Activated B cell treated with CpG ODN at 0.5 μM for 24 hours (primary cell): ENCODE measurements at regions of chr1 and their contacts with region 1.

Region 1: DNA sequence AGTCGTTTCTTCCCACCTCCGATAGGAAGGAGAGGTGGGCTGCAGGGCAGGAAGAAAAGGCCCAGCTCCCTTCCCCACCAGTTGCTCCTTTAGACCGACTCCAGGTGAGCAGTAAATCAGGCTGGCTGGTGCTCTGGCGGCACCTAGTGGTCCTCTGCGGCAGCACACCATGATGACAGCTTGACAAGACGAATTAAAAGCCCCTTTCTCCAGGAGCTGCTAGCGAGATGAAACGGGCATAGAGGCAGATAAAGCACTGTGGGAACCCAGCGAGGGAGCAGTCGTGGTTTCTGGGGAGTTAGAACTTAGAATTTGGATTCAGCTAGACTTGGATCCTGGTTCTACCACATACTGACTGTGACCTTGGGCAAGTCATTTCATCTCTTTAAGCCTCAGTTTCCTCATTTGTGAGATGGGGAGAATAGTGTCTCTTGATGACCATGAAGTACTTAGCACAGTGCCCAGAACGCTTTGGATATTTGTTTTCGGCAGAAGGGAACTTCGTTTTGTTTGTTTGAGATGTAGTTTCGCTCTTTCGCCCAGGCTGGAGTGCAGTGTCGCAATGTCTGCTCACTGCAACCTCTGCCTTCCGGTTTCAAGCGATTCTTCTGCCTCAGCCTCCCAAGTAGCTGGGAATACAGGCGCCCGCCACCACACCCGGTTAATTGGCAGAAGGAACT is 21.8 kb upstream of the COL9A2 start:
- DNase-seq: peak; percentile 87
- ATAC-seq: peak; percentile 93
- H3K4me3 Mint-ChIP-seq: peak overlapping the region; percentile 36
- H3K27ac Mint-ChIP-seq: peak overlapping the region; percentile 64
- H3K4me1 Mint-ChIP-seq: peaks cover 40% of the 10 kb centered on the region
- H3K27me3 Mint-ChIP-seq: no peaks in the 10 kb centered on the region
- CTCF ChIP-seq: peak; percentile 96

Region 2: DNA sequence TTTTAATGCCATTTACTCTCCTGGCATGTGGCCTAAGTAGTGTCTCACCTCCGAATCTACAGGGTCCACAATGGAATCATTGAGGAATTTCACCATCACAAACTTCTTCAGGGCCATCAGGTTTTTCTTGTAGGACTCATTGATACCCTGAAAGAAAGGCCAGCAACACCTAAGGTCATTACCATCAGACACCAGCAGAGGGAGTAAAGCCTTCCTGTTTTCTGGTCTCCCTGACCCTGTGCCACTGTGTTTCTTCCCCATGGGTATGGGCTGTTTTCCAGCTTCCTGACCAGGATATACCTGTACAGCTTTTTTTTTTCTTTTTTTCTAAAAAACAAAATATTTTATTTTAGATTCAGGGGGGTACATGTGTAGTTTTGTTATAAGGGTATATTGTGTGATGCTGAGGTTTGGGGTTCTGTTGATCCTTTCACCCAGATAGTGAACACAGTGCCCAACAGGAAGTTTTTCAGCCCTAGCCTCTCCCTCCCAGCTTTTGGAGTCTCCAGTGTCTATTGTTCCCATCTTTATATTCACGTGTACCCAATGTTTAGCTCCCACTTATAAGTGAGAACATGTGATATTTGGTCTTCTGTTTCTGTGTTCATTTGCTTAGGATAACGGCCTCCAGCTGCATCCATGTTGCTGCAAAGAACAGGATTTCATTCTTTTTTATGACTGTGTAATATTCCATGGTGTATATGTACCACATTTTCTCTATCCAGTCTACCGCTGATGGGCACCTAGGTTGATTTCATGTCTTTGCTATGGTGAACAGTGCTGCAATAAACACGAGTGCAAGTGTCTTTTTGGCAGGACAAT is 260.2 kb before region 1 on chr1:
- CTCF ChIA-PET with region 1: interaction called, 25 read pairs
- POLR2A ChIA-PET with region 1: no interaction called
- intact Hi-C with region 1: loop called (anchors 1 kb)
- DNase-seq: no peak
- ATAC-seq: peak; percentile 92
- H3K4me3 Mint-ChIP-seq: no peak overlapping the region
- H3K27ac Mint-ChIP-seq: no peak overlapping the region
- H3K4me1 Mint-ChIP-seq: peaks cover 13% of the 10 kb centered on the region
- H3K27me3 Mint-ChIP-seq: no peaks in the 10 kb centered on the region
- CTCF ChIP-seq: peak; percentile 74

Region 3: DNA sequence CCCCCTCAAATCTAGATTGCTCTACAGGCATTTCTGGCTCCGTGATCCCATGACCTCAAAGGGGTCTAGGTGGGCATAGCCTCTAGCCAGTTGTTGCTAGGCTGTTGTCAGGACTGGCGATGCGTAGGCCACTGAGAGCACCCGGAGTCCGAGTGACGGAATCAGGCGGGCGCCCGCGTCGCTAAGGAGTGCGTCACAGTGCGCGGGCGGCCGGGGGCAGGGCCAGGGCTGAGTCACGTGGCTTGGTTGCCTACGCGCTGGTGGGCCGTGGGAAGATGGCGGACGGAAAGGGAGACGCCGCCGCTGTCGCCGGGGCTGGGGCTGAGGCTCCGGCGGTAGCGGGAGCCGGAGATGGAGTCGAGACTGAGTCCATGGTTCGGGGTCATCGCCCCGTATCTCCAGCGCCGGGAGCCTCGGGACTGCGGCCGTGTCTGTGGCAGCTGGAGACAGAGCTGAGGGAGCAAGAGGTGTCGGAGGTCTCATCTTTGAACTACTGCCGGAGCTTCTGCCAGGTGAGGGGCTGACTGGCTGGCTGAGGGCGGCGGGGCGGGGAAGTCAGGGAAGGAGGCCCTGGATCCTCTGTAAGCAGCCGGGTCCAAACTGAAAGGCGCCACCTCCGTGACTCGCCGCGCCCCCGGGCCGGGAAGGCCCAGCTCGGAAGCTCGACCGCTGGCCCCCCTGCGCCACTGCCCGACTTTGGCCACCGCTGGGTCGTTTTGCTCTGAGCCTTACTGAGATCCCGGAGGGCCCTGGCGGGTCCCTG is 177.6 kb before region 1 on chr1 and contains the start of gene RLF:
- CTCF ChIA-PET with region 1: interaction called, 151 read pairs
- POLR2A ChIA-PET with region 1: no interaction called
- intact Hi-C with region 1: no loop called
- DNase-seq: peak; percentile 94
- ATAC-seq: peak; percentile 96
- H3K4me3 Mint-ChIP-seq: no peak within 1 kb of the TSS
- H3K27ac Mint-ChIP-seq: no peak within 1 kb of the TSS
- H3K4me1 Mint-ChIP-seq: peaks cover 22% of the 10 kb centered on the region
- H3K27me3 Mint-ChIP-seq: no peaks in the 10 kb centered on the region
- CTCF ChIP-seq: no peak
- total RNA-seq, gene RLF: 18.1 and 19.2 TPM in 2 replicates

Region 4: DNA sequence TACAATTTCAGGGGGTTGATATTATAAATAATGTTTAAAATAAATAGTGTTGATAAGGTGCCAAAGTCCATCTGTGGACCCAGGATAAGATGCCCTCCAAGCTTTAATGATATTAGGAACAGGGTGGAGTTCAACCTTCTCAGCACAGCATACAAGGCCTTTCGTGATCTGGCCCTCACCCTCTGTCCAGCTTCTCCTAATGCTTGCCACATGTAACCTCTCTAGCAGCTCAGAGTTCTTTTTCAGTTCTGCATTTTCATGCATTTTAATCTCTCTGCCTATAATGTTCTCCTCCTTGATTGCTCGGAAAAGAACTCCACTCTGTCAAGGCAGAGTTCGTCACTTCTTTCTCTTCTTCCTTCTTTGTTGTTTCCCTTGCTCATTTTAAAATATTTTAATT is 13.2 kb after region 1 on chr1:
- CTCF ChIA-PET with region 1: interaction called, 26 read pairs
- POLR2A ChIA-PET with region 1: interaction called, 25 read pairs
- intact Hi-C with region 1: no loop called
- DNase-seq: no peak
- ATAC-seq: peak; percentile 94
- H3K4me3 Mint-ChIP-seq: peak overlapping the region; percentile 65
- H3K27ac Mint-ChIP-seq: peak overlapping the region; percentile 81
- H3K4me1 Mint-ChIP-seq: peaks cover 54% of the 10 kb centered on the region
- H3K27me3 Mint-ChIP-seq: no peaks in the 10 kb centered on the region
- CTCF ChIP-seq: no peak

Region 5: GRCh38 chr1:40385437-40386358 is 46.8 kb after region 1 on chr1:
- CTCF ChIA-PET with region 1: interaction called, 39 read pairs
- POLR2A ChIA-PET with region 1: interaction called, 75 read pairs
- intact Hi-C with region 1: loop called (anchors 1 kb)
- DNase-seq: no peak
- ATAC-seq: peak; percentile 71
- H3K4me3 Mint-ChIP-seq: peak overlapping the region; percentile 74
- H3K27ac Mint-ChIP-seq: peak overlapping the region; percentile 96
- H3K4me1 Mint-ChIP-seq: peaks cover 97% of the 10 kb centered on the region
- H3K27me3 Mint-ChIP-seq: no peaks in the 10 kb centered on the region
- CTCF ChIP-seq: no peak

Region 6: GRCh38 chr1:40404670-40405462 is 66.0 kb after region 1 on chr1:
- CTCF ChIA-PET with region 1: interaction called, 184 read pairs
- POLR2A ChIA-PET with region 1: interaction called, 28 read pairs
- intact Hi-C with region 1: loop called (anchors 1 kb)
- DNase-seq: no peak
- ATAC-seq: no peak
- H3K4me3 Mint-ChIP-seq: peak overlapping the region; percentile 56
- H3K27ac Mint-ChIP-seq: peak overlapping the region; percentile 84
- H3K4me1 Mint-ChIP-seq: peaks cover 62% of the 10 kb centered on the region
- H3K27me3 Mint-ChIP-seq: no peaks in the 10 kb centered on the region
- CTCF ChIP-seq: peak; percentile 86